H1 (cell line): ENCODE measurements at regions of chr5 and their contacts with region 1.

Region 1: GRCh38 chr5:131263648-131264450 is at the start of gene CDC42SE2:
- DNase-seq: peak; percentile 59 to 87
- H3K4me3 ChIP-seq: peak within 1 kb of the TSS; percentile 80 to 95 (median 87)
- H3K27ac ChIP-seq: peak within 1 kb of the TSS; percentile 91
- H3K4me1 ChIP-seq: no peaks in the 10 kb centered on the region; a peak in 1 of 7 replicates
- H3K27me3 ChIP-seq: no peaks in the 10 kb centered on the region
- CTCF ChIP-seq: no peak
- EP300 ChIP-seq: peak in 1 of 2 experiments; percentile 75; a peak in 1 of 3 replicates
- POLR2A ChIP-seq: peak; percentile 81 to 85
- RAD21 ChIP-seq: no peak
- total RNA-seq, gene CDC42SE2: 26.3 and 30.8 TPM in 2 replicates

Region 2: DNA sequence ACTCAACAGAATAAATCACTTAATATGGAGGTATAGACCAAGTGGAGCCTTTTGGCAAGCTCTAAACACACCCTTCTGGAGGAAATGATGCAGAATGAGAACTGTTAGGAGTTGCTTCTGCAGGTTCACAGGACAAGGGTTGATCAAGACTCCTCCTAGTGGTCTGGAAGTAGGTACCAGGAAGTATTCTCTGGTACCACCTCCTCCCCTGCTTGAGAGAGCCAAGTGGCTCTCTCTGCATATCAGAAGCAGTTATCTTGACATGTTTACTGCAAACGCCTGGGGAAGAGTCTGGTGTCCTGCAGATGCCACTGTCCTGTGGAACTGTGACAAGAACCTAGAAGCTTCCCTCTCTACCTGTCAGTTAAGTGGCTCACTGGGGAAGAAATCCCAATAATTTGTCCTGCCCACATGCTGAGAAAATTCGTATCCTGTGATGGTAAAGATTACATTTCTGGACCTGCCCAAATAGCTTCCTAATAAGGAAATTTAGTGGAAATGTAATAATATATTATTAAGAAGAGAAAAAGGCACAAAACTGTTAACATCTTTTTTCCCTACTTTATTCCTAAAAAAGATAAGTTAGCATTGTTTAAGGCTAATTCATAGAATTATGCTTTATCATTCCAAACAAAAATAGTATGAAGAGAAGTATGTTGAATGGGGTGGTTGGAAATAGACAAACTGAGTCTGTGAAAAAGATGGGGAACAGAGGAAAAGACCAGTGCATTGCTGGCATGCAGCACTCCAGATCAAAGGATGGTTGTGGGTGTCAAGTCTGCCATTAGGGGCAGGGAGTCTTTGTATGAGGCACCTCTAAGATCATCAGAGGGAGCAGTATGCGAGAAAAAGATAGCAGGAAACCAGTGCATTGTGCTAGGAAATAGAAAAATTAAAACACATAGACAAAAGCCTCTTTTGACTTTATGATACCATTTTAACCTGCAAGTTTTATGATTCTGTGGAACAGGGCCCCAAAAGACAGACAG is 118.9 kb after region 1 on chr5:
- CTCF ChIA-PET with region 1: interaction called, 21 read pairs
- POLR2A ChIA-PET with region 1: interaction called, 3 read pairs
- DNase-seq: peak in 1 of 2 experiments; percentile 31
- H3K4me3 ChIP-seq: no peak overlapping the region
- H3K27ac ChIP-seq: no peak overlapping the region
- H3K4me1 ChIP-seq: peaks cover 0 to 4% (median 0%) of the 10 kb centered on the region in 4 experiments; a peak in 1 of 7 replicates
- H3K27me3 ChIP-seq: no peaks in the 10 kb centered on the region
- CTCF ChIP-seq: peak; percentile 16 to 88 (median 76)
- EP300 ChIP-seq: no peak
- POLR2A ChIP-seq: no peak
- RAD21 ChIP-seq: peak; percentile 93

Region 3: DNA sequence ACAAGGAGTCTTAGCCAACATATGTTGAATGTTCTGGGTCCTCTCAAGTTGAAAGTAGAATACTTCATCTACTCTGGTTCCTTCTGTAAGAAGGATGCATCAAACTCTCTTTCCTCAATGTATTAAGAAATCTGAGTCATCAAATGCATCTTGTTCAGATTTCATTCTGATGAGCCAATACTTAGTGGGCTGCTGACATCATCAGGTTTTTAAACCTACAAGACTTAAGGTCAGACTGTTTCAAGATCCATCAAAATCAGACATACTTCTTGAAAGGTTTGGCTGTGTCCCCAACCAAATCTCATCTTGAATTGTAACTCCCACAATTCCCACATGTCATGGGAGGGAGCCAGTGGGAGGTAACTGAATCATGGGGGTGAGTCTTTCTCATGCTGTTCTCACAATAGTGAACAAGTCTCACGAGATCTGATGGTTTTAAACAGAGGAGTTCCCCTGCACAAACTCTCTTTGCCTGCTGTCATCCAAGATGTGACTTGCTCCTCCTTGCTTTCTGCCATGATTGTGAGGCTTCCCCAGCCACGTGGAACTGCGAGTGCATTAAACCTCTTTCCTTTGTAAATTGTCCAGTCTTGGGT is 202.4 kb after region 1 on chr5:
- CTCF ChIA-PET with region 1: no interaction called
- POLR2A ChIA-PET with region 1: no interaction called
- DNase-seq: no peak
- H3K4me3 ChIP-seq: no peak overlapping the region
- H3K27ac ChIP-seq: no peak overlapping the region
- H3K4me1 ChIP-seq: no peaks in the 10 kb centered on the region
- H3K27me3 ChIP-seq: no peaks in the 10 kb centered on the region
- CTCF ChIP-seq: no peak
- EP300 ChIP-seq: no peak
- POLR2A ChIP-seq: no peak
- RAD21 ChIP-seq: no peak